Adrenal gland (tissue), 19 donors: ENCODE measurements at regions of chr1 and their contacts with region 1.

Region 1: GRCh38 chr1:15592285-15592684 is 7.4 kb upstream of the AGMAT start:
- DNase-seq: no peak
- H3K4me3 ChIP-seq: no peak overlapping the region
- H3K27ac ChIP-seq: no peak overlapping the region
- H3K4me1 ChIP-seq: peaks cover 0 to 9% of the 10 kb centered on the region in 2 donors
- H3K27me3 ChIP-seq: no peaks in the 10 kb centered on the region
- CTCF ChIP-seq: no peak
- POLR2A ChIP-seq: no peak

Region 2: GRCh38 chr1:15741183-15741850 is 149.0 kb after region 1 on chr1:
- intact Hi-C with region 1: loop called (anchors 2 kb)
- DNase-seq: peak; percentile 81 to 92 (median 88)
- H3K4me3 ChIP-seq: no peak overlapping the region
- H3K27ac ChIP-seq: no peak overlapping the region
- H3K4me1 ChIP-seq: peaks cover 7 to 21% of the 10 kb centered on the region in 2 donors
- H3K27me3 ChIP-seq: no peaks in the 10 kb centered on the region
- CTCF ChIP-seq: peak; percentile 79 to 92 (median 88)
- POLR2A ChIP-seq: no peak

Region 3: DNA sequence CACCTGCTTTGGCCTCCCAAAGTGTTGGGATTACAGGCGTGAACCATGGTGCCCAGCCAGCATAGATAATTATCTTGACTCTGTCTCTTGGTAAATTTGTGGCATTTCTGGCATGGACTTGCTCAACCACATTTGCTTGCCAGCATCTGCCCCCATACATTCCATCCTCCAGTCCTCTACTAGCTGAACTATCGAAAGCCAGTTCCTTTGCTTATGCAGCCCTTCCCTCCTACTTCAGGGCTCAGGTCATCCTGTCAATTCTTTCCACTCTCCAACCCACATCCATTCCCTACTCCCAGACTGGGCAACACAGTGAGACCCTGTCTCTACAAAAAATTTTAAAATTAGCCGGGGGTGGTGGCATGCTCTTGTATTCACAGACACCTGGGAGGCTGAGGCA is 228.2 kb after region 1 on chr1:
- intact Hi-C with region 1: no loop called
- DNase-seq: no peak
- H3K4me3 ChIP-seq: no peak overlapping the region
- H3K27ac ChIP-seq: no peak overlapping the region
- H3K4me1 ChIP-seq: peaks cover 0 to 6% of the 10 kb centered on the region in 2 donors
- H3K27me3 ChIP-seq: no peaks in the 10 kb centered on the region
- CTCF ChIP-seq: no peak
- POLR2A ChIP-seq: no peak